Activated CD4-positive, alpha-beta T cell treated with anti-CD3 and anti-CD28 coated beads, Interleukin-2, amount 10 ng/mL, durations not matched to agents 24 days and 14 days (primary cell): ENCODE measurements at regions of chr11 and their contacts with region 1.

Region 1: DNA sequence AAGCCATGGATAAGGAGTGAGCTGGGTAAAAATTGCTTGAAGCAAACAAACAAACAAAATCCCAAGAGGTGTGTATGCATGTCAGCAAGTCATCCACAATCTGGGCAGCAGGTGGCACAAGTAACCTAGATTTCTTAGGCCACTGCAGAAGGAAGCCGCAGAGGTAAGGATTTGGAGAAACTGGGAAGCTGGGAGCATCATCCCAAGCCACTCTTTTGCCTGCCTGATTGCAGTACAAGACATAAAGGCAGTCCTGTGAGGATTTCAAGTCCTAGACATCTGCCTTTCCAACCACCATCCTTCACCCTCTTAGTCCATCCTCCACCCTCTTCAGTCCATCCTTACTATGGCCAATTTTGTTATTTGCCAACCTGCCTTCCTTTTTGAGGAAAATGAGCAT is 67.2 kb upstream of the BMAL1 start:
- DNase-seq: peak; percentile 72
- H3K4me3 Mint-ChIP-seq: no peak overlapping the region
- H3K27ac Mint-ChIP-seq: no peak overlapping the region
- H3K4me1 Mint-ChIP-seq: peaks cover 32% of the 10 kb centered on the region
- H3K27me3 Mint-ChIP-seq: peaks cover 6% of the 10 kb centered on the region

Region 2: DNA sequence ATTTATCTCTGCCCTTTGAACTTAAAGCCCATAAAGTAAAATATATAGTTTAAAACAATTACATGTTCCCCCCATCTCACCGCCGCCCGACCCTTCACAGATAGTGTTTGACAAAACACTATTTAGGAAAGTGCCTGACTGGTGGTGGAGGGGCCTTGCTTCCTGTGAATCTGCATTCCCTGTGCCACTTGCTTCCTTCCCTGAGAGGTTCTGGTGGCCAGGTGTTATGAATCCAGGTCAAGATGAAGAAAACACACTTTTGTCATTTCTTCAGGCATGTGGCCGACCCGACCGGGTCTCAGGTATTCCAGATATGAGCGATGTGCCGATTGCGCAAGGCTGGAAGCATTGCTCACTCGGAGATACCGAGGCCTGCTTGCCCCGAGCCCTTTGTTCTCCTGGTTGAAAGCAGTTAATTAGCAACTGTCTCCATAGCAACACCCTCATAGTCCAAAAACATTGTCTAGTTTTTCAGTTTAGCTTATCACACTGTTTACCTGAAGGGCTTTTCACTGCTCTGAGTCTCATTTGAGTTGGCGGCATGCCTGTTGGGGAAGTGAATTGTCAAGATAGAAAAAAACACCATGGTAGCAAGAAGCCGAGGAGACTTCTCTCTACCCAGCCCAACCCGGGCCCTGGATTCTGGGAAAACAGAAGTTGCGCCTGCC is 407.9 kb before region 1 on chr11:
- intact Hi-C with region 1: no loop called
- DNase-seq: no peak
- H3K4me3 Mint-ChIP-seq: no peak overlapping the region
- H3K27ac Mint-ChIP-seq: no peak overlapping the region
- H3K4me1 Mint-ChIP-seq: peaks cover 8% of the 10 kb centered on the region
- H3K27me3 Mint-ChIP-seq: peaks cover 50% of the 10 kb centered on the region

Region 3: DNA sequence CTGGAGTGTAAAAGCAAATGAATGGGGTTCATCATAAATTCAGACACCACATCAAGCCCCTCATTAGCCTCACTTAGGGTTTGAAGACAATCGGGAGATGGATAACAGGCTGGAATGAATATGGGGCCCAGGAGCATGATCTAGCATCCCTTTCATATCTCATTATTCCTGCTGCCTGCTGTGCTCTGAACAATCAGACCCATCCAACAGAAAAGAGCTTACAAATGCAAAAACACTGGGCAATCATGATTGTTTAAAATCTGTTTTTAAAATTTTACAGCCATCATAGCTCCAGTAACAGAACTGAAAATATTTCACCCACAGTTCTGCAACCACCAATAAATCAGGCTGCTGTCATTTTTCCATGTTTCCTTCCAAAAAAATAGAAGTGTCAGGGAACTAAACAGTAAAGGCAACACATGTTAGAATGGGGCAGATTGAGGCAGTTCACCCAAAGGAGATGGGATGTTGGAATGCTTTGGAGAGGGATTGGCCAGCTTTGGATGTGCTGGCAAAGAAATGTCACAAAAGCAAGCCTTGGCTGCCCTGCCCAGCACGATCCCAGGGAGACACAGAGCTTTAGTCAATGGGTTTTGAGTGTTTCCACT is 19.4 kb after region 1 on chr11:
- intact Hi-C with region 1: no loop called
- DNase-seq: no peak
- H3K4me3 Mint-ChIP-seq: no peak overlapping the region
- H3K27ac Mint-ChIP-seq: no peak overlapping the region
- H3K4me1 Mint-ChIP-seq: peaks cover 4% of the 10 kb centered on the region
- H3K27me3 Mint-ChIP-seq: peaks cover 33% of the 10 kb centered on the region

Region 4: DNA sequence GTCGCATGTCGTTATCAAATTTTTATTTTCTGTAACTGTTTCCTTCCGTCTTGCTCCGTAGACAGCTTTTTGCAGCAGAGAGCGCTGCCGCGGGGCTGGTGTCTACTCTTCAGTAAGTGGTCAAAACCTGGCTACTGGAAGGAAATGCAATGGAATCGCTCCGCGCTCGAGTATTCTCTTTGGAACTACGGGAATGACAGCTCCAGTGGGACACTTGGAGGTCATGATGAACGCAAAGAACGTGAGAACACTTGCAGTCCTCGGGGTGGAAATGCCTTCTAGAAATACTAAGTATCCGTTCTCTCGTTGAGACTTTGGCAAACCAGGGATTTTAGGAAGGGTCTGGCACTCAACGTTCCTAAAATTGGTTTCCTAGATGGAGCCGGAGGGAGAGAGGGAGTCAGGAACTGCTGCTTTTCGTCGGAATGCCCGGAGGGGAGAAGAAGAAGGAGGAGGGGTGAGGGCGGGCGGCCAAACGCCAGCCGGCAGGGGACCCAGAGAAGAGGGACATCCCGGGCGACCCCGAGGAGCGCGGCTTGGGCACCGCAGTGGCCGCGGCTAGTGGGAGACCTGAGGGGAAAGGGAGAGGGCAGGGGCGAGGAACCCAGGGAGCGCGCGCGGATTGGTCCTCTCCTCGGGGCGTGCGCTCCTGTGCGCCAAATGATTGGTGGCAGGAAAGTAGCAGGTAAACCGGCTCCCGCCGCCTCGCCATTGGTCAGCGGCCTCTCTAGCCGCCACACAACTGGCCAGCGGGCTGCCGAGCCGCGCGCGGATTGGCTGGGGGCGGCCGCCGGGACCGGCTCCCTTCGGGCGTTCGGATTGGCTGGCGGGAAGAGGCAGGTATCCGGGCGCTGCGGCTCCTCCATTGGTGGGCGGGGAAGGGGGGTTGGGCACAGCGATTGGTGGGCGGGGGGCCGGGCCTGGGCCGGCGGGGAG is 66.7 kb after region 1 on chr11:
- intact Hi-C with region 1: loop called (anchors 2 kb)
- DNase-seq: peak; percentile 99
- H3K4me3 Mint-ChIP-seq: peak overlapping the region; percentile 98
- H3K27ac Mint-ChIP-seq: peak overlapping the region; percentile 85
- H3K4me1 Mint-ChIP-seq: peaks cover 48% of the 10 kb centered on the region
- H3K27me3 Mint-ChIP-seq: peaks cover 47% of the 10 kb centered on the region

Region 5: GRCh38 chr11:13335319-13335718 is 124.9 kb after region 1 on chr11:
- intact Hi-C with region 1: loop called (anchors 1 kb)
- DNase-seq: peak; percentile 91
- H3K4me3 Mint-ChIP-seq: no peak overlapping the region
- H3K27ac Mint-ChIP-seq: no peak overlapping the region
- H3K4me1 Mint-ChIP-seq: peaks cover 53% of the 10 kb centered on the region
- H3K27me3 Mint-ChIP-seq: no peaks in the 10 kb centered on the region

Region 6: GRCh38 chr11:13462901-13463778 is 252.7 kb after region 1 on chr11 and contains the start of gene BTBD10:
- intact Hi-C with region 1: loop called (anchors 1 kb)
- DNase-seq: peak; percentile 98
- H3K4me3 Mint-ChIP-seq: peak within 1 kb of the TSS; percentile 98
- H3K27ac Mint-ChIP-seq: peak within 1 kb of the TSS; percentile 97
- H3K4me1 Mint-ChIP-seq: peaks cover 30% of the 10 kb centered on the region
- H3K27me3 Mint-ChIP-seq: no peaks in the 10 kb centered on the region
- total RNA-seq, gene BTBD10: 20.3 and 21.8 TPM in 2 replicates